Right cardiac atrium (tissue), 5 donors: ENCODE measurements at regions of chr15 and their contacts with region 1.

Region 1: GRCh38 chr15:91522663-91523332 is 330.7 kb upstream of the SLCO3A1 start:
- DNase-seq: no peak
- ATAC-seq: peak in 1 of 2 donors; percentile 55
- H3K4me3 ChIP-seq: no peak overlapping the region
- H3K27ac ChIP-seq: no peak overlapping the region
- H3K4me1 ChIP-seq: no peaks in the 10 kb centered on the region
- H3K27me3 ChIP-seq: no peaks in the 10 kb centered on the region

Region 2: GRCh38 chr15:91302588-91303439 is 220.0 kb before region 1 on chr15:
- intact Hi-C with region 1: loop called (anchors 5 kb)
- DNase-seq: peak in 2 of 3 donors; percentile 39 to 50
- ATAC-seq: peak; percentile 77 to 88
- H3K4me3 ChIP-seq: no peak overlapping the region
- H3K27ac ChIP-seq: no peak overlapping the region
- H3K4me1 ChIP-seq: no peaks in the 10 kb centered on the region
- H3K27me3 ChIP-seq: no peaks in the 10 kb centered on the region

Region 3: DNA sequence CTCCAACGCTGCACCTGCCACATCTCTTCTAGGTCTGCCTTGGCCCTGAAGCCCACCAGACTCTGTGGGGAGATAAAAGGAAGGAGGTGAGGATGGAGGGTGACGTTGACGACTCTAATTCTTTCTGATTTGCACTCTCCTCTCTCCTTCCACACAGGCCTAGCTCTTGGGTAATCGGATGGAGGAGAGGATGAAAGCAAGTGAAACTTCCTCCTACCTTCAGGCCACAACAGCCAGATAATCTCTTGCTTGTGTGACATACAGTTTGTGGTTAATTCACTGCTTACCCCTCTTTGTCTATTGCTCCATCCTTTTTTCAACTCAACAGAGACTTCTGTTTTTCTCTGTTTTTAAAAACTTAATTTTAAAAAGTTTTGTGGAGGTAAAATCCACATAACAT is 214.6 kb before region 1 on chr15:
- intact Hi-C with region 1: loop called (anchors 5 kb)
- DNase-seq: no peak
- ATAC-seq: no peak
- H3K4me3 ChIP-seq: no peak overlapping the region
- H3K27ac ChIP-seq: no peak overlapping the region
- H3K4me1 ChIP-seq: no peaks in the 10 kb centered on the region
- H3K27me3 ChIP-seq: no peaks in the 10 kb centered on the region